HepG2 (cell line): ENCODE measurements at regions of chr3 and their contacts with region 1.

Region 1: DNA sequence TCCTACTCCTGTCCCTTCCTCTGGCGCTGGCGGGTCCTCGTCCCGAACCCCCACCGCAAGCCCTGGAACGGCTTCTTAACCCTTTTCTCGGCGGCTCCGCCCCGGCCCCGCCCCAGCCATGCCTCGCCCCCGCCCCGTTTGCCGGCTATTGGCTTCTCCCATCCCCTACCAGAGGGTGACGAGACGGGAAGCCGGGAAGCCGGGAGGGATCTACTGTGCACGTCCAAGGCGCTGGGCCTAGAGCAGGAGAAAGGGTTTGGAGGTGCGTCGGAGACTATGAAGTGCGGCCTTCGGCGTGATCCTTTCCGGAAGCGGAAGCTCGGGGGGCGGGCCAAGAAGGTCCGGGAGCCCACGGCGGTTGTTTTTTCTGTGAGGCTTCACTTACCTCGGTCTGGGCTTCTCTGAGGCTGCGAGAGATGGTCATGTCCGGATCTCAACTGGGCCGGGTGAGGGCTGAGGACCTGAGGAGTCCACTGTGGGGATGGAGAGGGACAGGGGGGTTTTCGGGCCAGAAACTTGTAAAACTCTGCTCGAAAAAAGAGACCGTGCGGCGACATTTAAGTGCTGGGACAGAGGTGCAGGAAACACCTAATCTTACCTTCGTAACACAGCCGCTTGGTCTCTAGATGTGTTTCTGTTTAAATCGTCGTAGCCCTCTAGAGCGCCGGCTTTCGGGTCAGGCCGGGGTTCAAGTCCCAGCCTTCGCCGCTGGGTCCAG is 21.4 kb downstream of the ROPN1B start:
- DNase-seq: peak; percentile 61
- ATAC-seq: peak; percentile 99
- H3K4me3 ChIP-seq: peak overlapping the region; percentile 59 to 79 (median 78)
- H3K27ac ChIP-seq: peak overlapping the region; percentile 33
- H3K4me1 ChIP-seq: peaks cover 27% of the 10 kb centered on the region
- H3K27me3 ChIP-seq: no peaks in the 10 kb centered on the region; a peak in 1 of 5 replicates
- CTCF ChIP-seq: no peak
- EP300 ChIP-seq: 0 out of 4 replicates have a peak, but pooled peaks of 1 of the 2 experiments have one; percentile 13
- POLR2A ChIP-seq: peak; percentile 55 to 75; a peak in 3 of 4 replicates
- RAD21 ChIP-seq: no peak

Region 2: DNA sequence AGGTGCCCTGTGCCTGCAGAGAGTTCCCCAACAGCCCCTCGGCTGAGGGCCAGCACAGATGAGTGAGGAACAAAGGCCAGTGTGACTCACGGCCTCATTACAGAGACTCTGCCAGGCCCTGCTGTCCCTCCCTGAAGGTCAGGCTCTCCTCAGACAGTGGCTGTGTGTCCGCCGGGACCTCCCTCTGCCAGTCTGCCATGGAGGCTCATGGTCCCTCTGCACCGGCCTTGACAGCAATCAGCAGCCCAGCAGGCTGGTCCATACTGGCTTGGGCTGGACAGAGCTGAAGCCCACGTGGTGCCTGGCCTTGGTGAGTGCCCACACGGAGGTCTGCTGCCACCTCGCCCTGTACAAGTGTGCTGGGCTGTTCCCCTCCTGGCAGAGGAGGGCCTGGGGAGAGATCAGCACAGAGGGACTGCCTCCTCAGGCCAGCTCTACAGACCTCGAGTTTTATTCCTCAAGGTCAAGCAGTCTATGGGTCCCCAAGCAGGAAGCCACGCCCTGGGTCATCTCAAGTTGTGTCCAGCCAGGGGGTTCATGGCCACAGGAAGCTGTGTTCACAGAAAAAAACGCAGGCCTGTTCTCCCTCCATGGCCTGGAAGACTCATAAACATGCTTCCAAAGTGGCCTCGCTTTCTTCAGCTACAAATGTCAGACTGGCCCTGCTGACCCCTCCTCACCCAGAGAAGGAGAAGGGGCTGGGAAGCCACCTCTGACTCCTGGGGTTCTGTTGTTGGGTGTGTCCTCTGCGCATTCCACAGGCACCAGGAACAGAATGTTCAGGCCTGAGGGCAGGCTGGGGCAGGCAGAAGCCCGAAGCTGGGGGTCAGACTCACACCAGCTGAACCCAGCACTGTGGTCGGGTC is 66.5 kb after region 1 on chr3:
- CTCF ChIA-PET with region 1: no interaction called
- POLR2A ChIA-PET with region 1: no interaction called
- in situ Hi-C with region 1: no loop called
- intact Hi-C with region 1: loop called (anchors 10 kb)
- DNase-seq: peak; percentile 85
- ATAC-seq: peak; percentile 97
- H3K4me3 ChIP-seq: peak overlapping the region in 1 of 3 experiments; percentile 44; a peak in 1 of 6 replicates
- H3K27ac ChIP-seq: peak overlapping the region; percentile 34
- H3K4me1 ChIP-seq: peaks cover 38% of the 10 kb centered on the region
- H3K27me3 ChIP-seq: no peaks in the 10 kb centered on the region
- CTCF ChIP-seq: peak; percentile 7; the same call in 1 of the 2 replicates
- EP300 ChIP-seq: 0 out of 4 replicates have a peak, but pooled peaks of 1 of the 2 experiments have one; percentile 16
- POLR2A ChIP-seq: 0 out of 4 replicates have a peak, but pooled peaks of 1 of the 2 experiments have one; percentile 32
- RAD21 ChIP-seq: 0 out of 2 replicates have a peak, but pooled peaks have one; percentile 29

Region 3: DNA sequence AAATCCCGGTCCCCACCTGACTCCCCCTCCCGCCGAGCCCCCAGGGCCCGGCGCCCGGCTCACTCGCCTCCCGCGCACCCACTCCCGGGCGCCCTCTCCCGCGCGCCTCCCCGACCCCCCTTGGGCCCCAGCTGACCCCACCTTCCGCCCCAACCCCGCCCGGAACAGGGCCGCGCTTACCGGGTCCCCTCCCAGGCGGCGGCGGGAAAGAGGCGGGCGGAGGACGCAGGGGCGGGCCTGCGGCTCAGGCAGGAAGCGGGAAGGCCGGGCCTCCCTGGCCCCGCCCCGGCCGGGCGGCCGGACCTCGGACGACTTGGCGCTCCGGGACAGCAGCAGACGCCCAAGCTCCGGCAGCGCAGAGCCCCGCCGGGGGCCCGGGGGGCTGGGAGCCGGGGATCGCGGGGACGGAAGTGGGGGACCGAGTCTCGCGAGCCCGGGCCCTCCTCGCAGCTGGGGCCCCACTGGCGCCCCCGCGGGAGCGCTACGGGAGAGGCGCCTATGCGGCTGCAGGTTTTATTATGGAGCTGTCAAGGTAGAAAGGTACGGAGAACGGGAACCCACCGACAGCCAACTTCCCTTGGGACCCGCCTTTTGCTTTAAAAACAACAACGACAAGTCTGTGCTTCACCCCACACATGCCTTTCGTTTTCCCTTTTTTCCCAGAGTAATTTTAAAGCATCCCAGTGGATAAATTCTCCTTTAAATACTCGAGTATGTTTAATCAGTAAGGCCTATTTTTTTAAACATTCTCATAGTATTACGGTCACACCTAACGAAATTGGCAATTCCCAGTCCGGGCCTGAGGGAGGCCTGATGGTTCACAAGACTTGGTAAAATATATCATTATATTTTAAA is 93.7 kb after region 1 on chr3 and contains the start of gene SLC41A3:
- CTCF ChIA-PET with region 1: no interaction called
- POLR2A ChIA-PET with region 1: no interaction called
- in situ Hi-C with region 1: no loop called
- intact Hi-C with region 1: loop called (anchors 5 kb)
- DNase-seq: peak; percentile 80
- ATAC-seq: peak; percentile 93
- H3K4me3 ChIP-seq: peak within 1 kb of the TSS; percentile 79 to 94 (median 82)
- H3K27ac ChIP-seq: peak within 1 kb of the TSS; percentile 76
- H3K4me1 ChIP-seq: peaks cover 27% of the 10 kb centered on the region
- H3K27me3 ChIP-seq: no peaks in the 10 kb centered on the region
- CTCF ChIP-seq: peak; percentile 60
- EP300 ChIP-seq: no peak
- POLR2A ChIP-seq: peak in 1 of 2 experiments; percentile 71; a peak in 2 of 4 replicates
- RAD21 ChIP-seq: peak; percentile 69
- total RNA-seq, gene SLC41A3: 16.2 and 26.0 TPM in 2 replicates